ENCODE measurements at regions of chr12 and their contacts with region 1.

Region 1: DNA sequence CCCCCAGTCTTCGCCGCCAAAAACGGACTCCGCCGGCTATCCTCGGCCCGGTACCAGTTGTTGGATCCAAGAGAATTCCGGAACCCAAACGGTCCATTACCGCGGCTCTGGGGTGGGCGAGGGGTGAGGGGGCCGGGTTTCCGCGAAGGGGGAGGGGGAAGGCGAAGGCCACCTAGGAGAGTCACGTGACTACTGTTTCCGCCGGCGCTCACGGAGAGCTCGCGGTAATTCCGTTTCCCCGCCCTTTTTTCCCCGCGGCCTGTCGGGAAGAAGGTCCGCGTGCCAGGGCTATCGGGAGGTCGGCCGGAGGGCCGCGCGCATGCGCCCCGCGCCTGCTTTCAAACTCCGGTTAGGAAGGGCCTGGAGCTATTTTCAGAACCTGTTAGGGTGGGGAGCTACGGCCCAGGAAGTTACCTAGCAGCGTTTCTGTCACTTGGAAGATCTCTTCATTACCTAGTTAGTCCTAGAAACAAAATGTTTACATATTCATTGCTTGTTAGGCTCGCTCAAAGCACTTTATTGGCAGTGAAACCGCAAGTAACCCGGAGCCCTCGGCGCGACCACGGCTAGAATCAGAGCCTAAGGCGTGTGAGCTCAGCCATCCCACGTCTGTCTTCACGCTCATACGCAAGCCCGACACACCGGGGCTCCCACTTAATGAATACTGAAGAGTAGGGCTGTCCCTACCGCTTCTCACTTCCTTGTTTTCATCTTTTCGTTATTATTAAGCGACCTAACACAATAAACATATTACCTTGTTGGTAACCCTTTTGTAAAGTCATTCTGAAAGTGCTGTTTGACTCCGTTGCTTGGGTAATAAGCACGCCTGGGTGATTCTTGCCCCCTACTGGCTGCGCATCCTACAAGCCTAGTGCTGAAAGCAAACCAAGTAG is 624 bp upstream of the SBNO1 start:
- DNase-seq: peak; percentile 98
- ATAC-seq: peak; percentile 82
- H3K4me3 ChIP-seq: peak overlapping the region; percentile 61; the same call in 1 of the 2 replicates
- H3K27ac ChIP-seq: peak overlapping the region; percentile 99
- H3K4me1 ChIP-seq: peaks cover 10% of the 10 kb centered on the region
- H3K27me3 ChIP-seq: no peaks in the 10 kb centered on the region
- CTCF ChIP-seq: peak; percentile 76 to 89 (median 82)
- EP300 ChIP-seq: peak; percentile 99
- POLR2A ChIP-seq: peak; percentile 87
- RAD21 ChIP-seq: peak; percentile 66

Region 2: DNA sequence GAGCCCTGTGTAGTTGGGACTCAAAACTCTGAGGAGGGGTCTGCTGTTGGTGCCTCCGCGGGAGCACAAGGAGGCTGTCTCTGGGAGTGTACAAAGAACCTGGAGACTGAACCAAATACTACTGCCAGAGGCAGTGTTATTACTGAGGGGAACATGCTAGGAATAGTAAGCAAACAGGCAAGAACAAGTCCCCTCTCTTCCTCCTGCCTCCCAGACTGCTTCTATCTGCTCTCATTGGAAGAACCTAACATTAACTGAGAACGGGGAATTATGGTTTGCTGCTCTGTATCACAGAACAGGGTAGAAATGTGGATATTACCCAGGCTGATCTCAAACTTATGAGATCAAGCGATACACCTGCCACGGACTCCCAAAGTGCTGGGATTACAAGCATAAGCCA is 14.1 kb after region 1 on chr12:
- CTCF ChIA-PET with region 1: interaction called, 13 read pairs
- POLR2A ChIA-PET with region 1: interaction called, 23 read pairs
- RAD21 ChIA-PET with region 1: interaction called, 38 read pairs
- SMC1A ChIA-PET with region 1: interaction called, 13 read pairs
- in situ Hi-C with region 1: no loop called
- intact Hi-C with region 1: loop called (anchors 1 kb)
- DNase-seq: no peak
- ATAC-seq: no peak
- H3K4me3 ChIP-seq: no peak overlapping the region
- H3K27ac ChIP-seq: no peak overlapping the region
- H3K4me1 ChIP-seq: peaks cover 4% of the 10 kb centered on the region; the same call in 1 of the 2 replicates
- H3K27me3 ChIP-seq: no peaks in the 10 kb centered on the region
- CTCF ChIP-seq: no peak
- EP300 ChIP-seq: no peak
- POLR2A ChIP-seq: no peak
- RAD21 ChIP-seq: no peak

Region 3: GRCh38 chr12:123427036-123427769 is 61.9 kb after region 1 on chr12:
- CTCF ChIA-PET with region 1: interaction called, 8 read pairs
- POLR2A ChIA-PET with region 1: interaction called, 17 read pairs
- RAD21 ChIA-PET with region 1: interaction called, 22 read pairs
- SMC1A ChIA-PET with region 1: interaction called, 17 read pairs
- in situ Hi-C with region 1: no loop called
- intact Hi-C with region 1: loop called (anchors 1 kb)
- DNase-seq: peak; percentile 97
- ATAC-seq: peak; percentile 90
- H3K4me3 ChIP-seq: peak overlapping the region; percentile 46; the same call in 1 of the 2 replicates
- H3K27ac ChIP-seq: peak overlapping the region; percentile 66
- H3K4me1 ChIP-seq: peaks cover 33% of the 10 kb centered on the region
- H3K27me3 ChIP-seq: no peaks in the 10 kb centered on the region
- CTCF ChIP-seq: no peak
- EP300 ChIP-seq: peak; percentile 42 to 77
- POLR2A ChIP-seq: peak; percentile 68
- RAD21 ChIP-seq: no peak

Region 4: GRCh38 chr12:123457980-123458783 is 92.9 kb after region 1 on chr12 and contains the start of gene SNRNP35:
- CTCF ChIA-PET with region 1: interaction called, 7 read pairs
- POLR2A ChIA-PET with region 1: interaction called, 5 read pairs
- RAD21 ChIA-PET with region 1: interaction called, 6 read pairs
- SMC1A ChIA-PET with region 1: interaction called, 4 read pairs
- in situ Hi-C with region 1: no loop called
- intact Hi-C with region 1: loop called (anchors 1 kb)
- DNase-seq: peak; percentile 69
- ATAC-seq: peak; percentile 85
- H3K4me3 ChIP-seq: peak within 1 kb of the TSS; percentile 87
- H3K27ac ChIP-seq: peak within 1 kb of the TSS; percentile 99
- H3K4me1 ChIP-seq: peaks cover 4% of the 10 kb centered on the region; the same call in 1 of the 2 replicates
- H3K27me3 ChIP-seq: no peaks in the 10 kb centered on the region
- CTCF ChIP-seq: no peak
- EP300 ChIP-seq: peak in 1 of 2 experiments; percentile 98; a peak in 2 of 4 replicates
- POLR2A ChIP-seq: peak; percentile 89
- RAD21 ChIP-seq: no peak
- polyA plus RNA-seq, gene SNRNP35: 25.0 to 49.6 TPM

Region 5: GRCh38 chr12:123621619-123622530 is 256.6 kb after region 1 on chr12:
- CTCF ChIA-PET with region 1: no interaction called
- POLR2A ChIA-PET with region 1: interaction called, 13 read pairs
- RAD21 ChIA-PET with region 1: no interaction called
- SMC1A ChIA-PET with region 1: no interaction called
- in situ Hi-C with region 1: no loop called
- intact Hi-C with region 1: no loop called
- DNase-seq: no peak
- ATAC-seq: no peak
- H3K4me3 ChIP-seq: no peak overlapping the region
- H3K27ac ChIP-seq: no peak overlapping the region
- H3K4me1 ChIP-seq: no peaks in the 10 kb centered on the region
- H3K27me3 ChIP-seq: no peaks in the 10 kb centered on the region
- CTCF ChIP-seq: no peak
- EP300 ChIP-seq: no peak
- POLR2A ChIP-seq: peak; percentile 70
- RAD21 ChIP-seq: no peak